ENCODE measurements at regions of chr17 and their contacts with region 1.

Region 1: DNA sequence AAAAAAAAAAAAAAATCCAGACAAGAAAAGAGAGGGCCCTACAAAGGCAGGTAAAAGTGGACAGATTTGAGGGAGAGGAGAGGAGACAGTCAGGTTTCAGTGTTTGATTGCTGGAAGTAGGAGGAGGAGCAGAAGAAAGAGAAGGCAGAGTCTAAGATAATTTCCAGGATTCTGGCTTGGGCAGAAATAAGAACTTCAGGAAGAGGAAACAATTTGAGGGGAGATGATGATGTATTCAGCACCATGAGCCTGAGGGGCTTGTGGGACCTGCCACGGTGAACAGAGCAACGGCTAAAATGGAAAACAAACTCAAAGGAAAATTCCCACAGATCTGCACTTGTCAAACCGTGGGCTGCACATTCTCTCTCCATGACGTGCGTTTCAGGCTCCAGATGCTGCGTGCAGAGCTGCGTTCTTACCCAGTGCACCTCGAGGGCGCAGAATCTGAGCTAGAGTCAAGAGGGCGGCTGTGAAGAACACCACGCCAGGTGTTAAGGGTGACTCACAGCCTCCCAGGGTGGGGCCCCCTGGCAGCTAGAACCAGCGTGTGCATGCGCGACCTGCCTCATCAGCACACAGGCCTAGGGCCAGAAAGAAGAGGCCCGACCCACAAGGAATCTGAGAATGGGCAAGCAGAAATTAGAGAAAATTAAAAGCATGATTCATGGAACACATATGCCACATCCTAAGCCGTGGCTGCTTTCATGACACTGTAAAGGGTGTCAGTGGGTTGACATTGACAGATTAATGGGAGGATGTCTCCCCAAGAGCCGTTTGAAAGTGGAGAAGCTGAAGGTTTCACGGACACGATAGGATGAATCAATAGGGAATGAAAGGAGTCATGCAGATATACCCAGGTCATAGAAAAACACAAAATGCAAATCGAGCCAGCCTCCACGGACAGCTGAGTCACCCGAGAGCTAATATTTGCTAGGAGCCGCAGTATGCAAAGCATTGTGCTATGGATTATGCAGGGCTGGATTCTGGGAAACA is 29.1 kb downstream of the MARCHF10 start:
- DNase-seq: peak; percentile 96
- H3K4me3 Mint-ChIP-seq: peak overlapping the region; percentile 70
- H3K27ac Mint-ChIP-seq: peak overlapping the region; percentile 92
- H3K4me1 Mint-ChIP-seq: peaks cover 34% of the 10 kb centered on the region
- H3K27me3 Mint-ChIP-seq: no peaks in the 10 kb centered on the region
- CTCF ChIP-seq: no peak

Region 2: GRCh38 chr17:62703775-62704378 is 75.1 kb before region 1 on chr17:
- CTCF ChIA-PET with region 1: interaction called, 4 read pairs
- POLR2A ChIA-PET with region 1: interaction called, 9 read pairs
- intact Hi-C with region 1: loop called (anchors 1 kb)
- DNase-seq: peak; percentile 75
- H3K4me3 Mint-ChIP-seq: peak overlapping the region; percentile 74
- H3K27ac Mint-ChIP-seq: peak overlapping the region; percentile 15
- H3K4me1 Mint-ChIP-seq: peaks cover 7% of the 10 kb centered on the region
- H3K27me3 Mint-ChIP-seq: no peaks in the 10 kb centered on the region
- CTCF ChIP-seq: peak; percentile 88

Region 3: DNA sequence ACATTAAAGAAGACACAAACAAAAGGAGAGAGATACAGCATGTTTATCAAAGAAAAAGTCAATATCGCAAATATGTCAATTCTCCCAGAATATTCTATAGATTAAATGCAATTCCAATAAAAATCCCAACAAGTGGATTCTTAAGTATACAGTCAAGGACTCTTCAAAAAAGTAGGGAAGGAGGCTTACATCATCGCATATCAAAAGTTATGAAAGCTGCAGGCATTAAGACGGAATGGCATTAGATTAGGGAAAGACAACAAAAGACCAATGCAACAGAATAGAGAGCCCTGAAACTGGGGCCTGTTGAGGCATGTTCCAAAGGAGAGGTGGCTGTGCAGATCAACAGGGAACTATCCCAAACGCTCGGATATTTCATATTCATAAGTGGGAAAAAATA is 46.9 kb before region 1 on chr17:
- CTCF ChIA-PET with region 1: interaction called, 4 read pairs
- POLR2A ChIA-PET with region 1: interaction called, 10 read pairs
- intact Hi-C with region 1: no loop called
- DNase-seq: peak; percentile 72
- H3K4me3 Mint-ChIP-seq: peak overlapping the region; percentile 29
- H3K27ac Mint-ChIP-seq: peak overlapping the region; percentile 63
- H3K4me1 Mint-ChIP-seq: peaks cover 13% of the 10 kb centered on the region
- H3K27me3 Mint-ChIP-seq: no peaks in the 10 kb centered on the region
- CTCF ChIP-seq: no peak

Region 4: GRCh38 chr17:62791751-62792445 is 12.9 kb after region 1 on chr17:
- CTCF ChIA-PET with region 1: no interaction called
- POLR2A ChIA-PET with region 1: interaction called, 11 read pairs
- intact Hi-C with region 1: no loop called
- DNase-seq: peak; percentile 90
- H3K4me3 Mint-ChIP-seq: peak overlapping the region; percentile 24
- H3K27ac Mint-ChIP-seq: peak overlapping the region; percentile 96
- H3K4me1 Mint-ChIP-seq: peaks cover 30% of the 10 kb centered on the region
- H3K27me3 Mint-ChIP-seq: no peaks in the 10 kb centered on the region
- CTCF ChIP-seq: no peak

Region 5: DNA sequence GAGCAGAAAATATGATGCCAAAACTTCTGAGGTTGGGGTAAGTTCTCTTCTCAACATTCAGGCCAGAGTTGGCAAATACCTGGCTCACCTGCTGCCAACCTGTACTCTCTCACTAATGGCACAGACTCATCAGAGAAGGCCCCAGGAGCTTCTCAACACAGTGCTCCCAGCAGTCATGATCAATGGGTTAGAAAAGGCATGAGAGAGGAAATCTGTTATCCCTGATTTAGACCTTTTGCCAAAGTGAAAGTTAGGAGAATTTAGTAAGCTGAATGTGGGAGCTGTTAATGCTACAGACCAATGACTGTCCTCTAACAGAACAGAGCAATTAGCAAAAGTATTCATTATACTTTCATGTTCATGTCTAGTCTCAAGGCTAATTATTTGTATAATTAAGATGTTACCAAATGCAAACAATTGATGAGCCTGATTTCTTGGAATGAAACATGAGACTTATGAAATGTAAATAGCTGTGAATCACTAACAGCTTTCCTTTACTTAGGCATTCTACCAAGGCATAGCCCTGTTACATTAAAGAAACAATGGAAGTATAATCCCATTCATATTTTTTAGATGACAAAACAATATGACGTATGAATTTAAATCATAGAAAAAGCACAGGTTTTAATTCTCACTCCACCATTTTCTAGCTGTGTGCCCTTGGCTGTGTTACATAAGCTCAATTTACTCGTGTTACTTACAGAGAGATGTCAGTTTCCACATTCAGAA is 97.9 kb after region 1 on chr17:
- CTCF ChIA-PET with region 1: no interaction called
- POLR2A ChIA-PET with region 1: interaction called, 19 read pairs
- intact Hi-C with region 1: no loop called
- DNase-seq: peak; percentile 61
- H3K4me3 Mint-ChIP-seq: no peak overlapping the region
- H3K27ac Mint-ChIP-seq: peak overlapping the region; percentile 54
- H3K4me1 Mint-ChIP-seq: peaks cover 14% of the 10 kb centered on the region
- H3K27me3 Mint-ChIP-seq: no peaks in the 10 kb centered on the region
- CTCF ChIP-seq: no peak

Region 6: GRCh38 chr17:62968445-62968923 is 189.5 kb after region 1 on chr17:
- CTCF ChIA-PET with region 1: interaction called, 12 read pairs
- POLR2A ChIA-PET with region 1: interaction called, 46 read pairs
- intact Hi-C with region 1: loop called (anchors 1 kb)
- DNase-seq: peak; percentile 89
- H3K4me3 Mint-ChIP-seq: peak overlapping the region; percentile 61
- H3K27ac Mint-ChIP-seq: no peak overlapping the region
- H3K4me1 Mint-ChIP-seq: peaks cover 27% of the 10 kb centered on the region
- H3K27me3 Mint-ChIP-seq: no peaks in the 10 kb centered on the region
- CTCF ChIP-seq: peak; percentile 87